Activated B cell treated with CpG ODN at 0.5 μM for 24 hours (primary cell): ENCODE measurements at regions of chr16 and their contacts with region 1.

Region 1: DNA sequence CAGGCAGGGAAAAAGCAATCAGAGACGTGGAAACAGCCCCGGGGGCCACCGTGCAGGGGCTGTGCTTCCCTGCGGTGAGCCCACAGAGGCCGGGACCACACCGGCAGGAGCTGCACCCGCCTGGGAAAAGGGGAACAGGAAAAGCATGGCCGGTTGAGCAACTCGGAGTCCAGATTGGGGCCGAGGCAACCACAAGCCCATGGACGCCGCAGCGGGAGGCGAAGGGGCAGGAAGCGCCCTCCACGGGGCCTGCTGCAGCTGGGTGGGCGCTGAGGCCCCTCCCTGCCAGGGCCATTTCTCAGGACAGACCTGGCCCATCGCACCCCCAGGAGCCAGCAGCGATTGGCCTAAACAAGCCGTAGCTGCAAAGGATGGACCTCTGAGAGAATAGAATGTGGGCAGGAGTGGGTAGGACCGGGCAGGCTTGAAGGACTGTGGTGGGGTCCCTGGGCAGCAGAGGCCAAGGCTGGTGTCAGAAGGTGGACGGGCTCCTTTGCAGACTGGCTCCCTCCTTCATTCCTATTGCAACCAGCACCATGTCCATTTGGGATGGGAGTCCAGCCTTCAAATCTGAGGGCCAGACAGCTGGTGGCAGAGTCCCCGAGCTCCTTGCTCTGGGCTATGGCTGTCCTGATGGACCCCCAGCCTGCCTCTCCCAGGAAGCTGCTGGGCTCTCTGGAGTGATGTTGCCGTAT is 30.4 kb downstream of the COX4I1 start:
- DNase-seq: no peak
- ATAC-seq: no peak
- H3K4me3 Mint-ChIP-seq: peak overlapping the region; percentile 67
- H3K27ac Mint-ChIP-seq: peak overlapping the region; percentile 88
- H3K4me1 Mint-ChIP-seq: peaks cover 57% of the 10 kb centered on the region
- H3K27me3 Mint-ChIP-seq: no peaks in the 10 kb centered on the region
- CTCF ChIP-seq: no peak

Region 2: GRCh38 chr16:85806539-85806938 is 23.4 kb before region 1 on chr16:
- CTCF ChIA-PET with region 1: no interaction called
- POLR2A ChIA-PET with region 1: no interaction called
- intact Hi-C with region 1: no loop called
- DNase-seq: no peak
- ATAC-seq: no peak
- H3K4me3 Mint-ChIP-seq: no peak overlapping the region
- H3K27ac Mint-ChIP-seq: no peak overlapping the region
- H3K4me1 Mint-ChIP-seq: peaks cover 23% of the 10 kb centered on the region
- H3K27me3 Mint-ChIP-seq: peaks cover 4% of the 10 kb centered on the region
- CTCF ChIP-seq: no peak

Region 3: GRCh38 chr16:85888405-85889331 is 58.8 kb after region 1 on chr16:
- CTCF ChIA-PET with region 1: no interaction called
- POLR2A ChIA-PET with region 1: interaction called, 4 read pairs
- intact Hi-C with region 1: loop called (anchors 1 kb)
- DNase-seq: no peak
- ATAC-seq: peak; percentile 90
- H3K4me3 Mint-ChIP-seq: peak overlapping the region; percentile 44
- H3K27ac Mint-ChIP-seq: peak overlapping the region; percentile 90
- H3K4me1 Mint-ChIP-seq: peaks cover 46% of the 10 kb centered on the region
- H3K27me3 Mint-ChIP-seq: no peaks in the 10 kb centered on the region
- CTCF ChIP-seq: no peak